GM10248 (cell line): ENCODE measurements at regions of chr7 and their contacts with region 1.

Region 1: DNA sequence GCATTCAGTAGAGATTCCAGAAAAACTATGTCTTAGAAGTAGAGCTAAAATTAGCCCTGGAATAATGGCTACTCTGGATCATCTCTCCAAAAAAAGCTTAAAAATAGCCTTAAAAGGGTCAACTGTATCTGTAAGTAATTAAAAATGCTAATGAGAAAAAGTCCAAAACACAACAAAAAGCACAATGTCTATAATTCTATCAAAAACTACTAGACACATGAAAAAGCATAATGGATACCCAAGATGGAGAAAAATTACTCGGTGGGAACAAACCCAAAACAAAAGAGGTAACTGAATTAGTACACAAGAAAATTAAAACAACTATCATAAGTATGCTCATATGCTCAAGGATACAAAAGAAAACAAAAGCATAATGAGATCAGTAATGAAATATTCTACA is 15.4 kb downstream of the ORC5 start:
- DNase-seq: no peak
- CTCF ChIP-seq: no peak

Region 2: DNA sequence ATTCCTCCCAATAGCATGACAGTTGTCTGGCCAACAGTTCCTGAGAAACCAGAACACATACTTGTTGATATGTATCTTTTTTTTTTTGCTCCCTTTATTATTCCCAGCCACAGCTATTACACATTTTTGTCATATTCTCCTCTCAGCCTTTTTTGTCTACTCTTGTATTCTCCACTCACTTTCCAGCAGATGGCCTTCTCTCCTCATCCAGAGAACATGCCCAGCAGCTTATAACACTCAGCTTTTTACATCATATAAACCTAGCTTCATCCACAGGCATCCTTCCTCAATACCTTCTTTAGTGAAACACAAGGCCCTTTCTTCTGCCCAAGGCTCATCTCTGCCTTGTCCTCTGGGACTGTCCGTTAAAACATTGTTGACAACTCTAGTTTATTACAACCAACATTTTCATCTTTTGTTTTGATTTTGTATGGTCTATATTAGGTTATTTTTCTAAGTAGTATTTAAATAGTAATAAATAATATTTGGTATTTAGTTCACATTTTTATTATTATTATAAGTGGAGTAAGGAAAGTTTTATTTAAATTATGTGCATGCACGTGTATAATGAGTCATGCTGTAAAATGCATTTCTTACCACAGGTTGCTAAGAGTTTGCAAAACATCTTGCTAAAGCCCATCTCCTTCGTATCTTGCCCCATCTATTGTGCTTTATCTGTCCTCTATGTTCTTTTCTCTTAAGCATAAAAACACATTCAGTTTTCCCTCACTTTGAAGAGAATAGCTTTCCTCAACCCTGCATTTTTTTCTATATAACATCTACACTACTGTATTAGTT is 86.1 kb before region 1 on chr7:
- CTCF ChIA-PET with region 1: no interaction called
- POLR2A ChIA-PET with region 1: no interaction called
- DNase-seq: no peak
- CTCF ChIP-seq: no peak

Region 3: DNA sequence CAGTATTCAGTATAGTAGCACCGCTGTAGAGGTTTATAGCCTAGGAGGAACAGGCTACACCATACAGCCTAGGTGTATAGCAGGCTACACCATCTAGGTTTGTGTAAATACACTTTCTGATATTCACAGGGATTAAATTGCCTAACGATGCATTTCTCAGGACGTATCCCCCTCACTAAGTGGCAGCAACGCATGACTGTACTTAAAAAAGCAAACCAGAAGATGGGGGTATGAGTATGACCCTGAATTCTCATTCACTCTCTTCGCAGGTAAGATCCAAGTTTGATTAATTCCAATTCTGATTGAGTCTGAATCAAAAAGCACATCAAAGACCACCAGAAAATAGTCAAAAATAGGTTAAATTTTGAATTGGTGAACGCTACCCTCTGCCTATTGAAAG is 14.4 kb after region 1 on chr7:
- CTCF ChIA-PET with region 1: interaction called, 11 read pairs
- POLR2A ChIA-PET with region 1: no interaction called
- DNase-seq: no peak
- CTCF ChIP-seq: no peak